ENCODE measurements at regions of chr19 and their contacts with region 1.

Region 1: DNA sequence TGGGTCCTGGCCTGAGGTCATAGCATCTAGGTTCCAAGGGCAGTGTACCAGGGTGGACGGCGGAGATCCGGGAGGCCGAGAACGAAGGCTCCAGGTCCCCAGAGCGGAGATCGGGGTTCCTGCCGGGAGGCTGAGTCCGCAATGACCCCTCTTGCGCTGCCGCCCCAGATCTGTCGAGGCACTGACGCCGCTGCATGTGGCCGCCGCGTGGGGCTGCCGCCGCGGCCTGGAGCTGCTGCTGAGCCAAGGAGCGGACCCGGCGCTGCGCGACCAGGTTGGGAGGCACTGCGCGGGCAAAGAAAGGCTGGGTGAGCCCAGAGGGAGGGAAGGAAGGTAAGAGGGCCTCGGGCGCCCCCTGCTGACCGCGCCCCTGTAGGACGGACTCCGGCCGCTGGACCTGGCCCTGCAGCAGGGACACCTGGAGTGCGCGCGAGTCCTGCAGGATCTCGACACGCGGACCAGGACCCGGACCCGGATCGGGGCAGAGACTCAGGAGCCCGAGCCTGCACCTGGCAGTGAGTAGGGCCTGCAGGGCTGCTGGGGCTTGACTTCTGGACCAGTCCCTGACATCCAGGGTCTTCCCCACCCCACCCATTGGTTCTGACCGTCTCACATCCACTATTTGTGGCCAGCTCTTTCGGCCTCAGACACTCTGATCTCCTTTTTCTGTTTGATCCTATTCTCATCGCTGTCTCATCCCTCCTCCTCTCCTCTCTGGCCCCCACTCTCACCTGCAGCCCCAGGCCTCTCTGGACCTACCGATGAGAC is 971 bp downstream of the ANKLE1 start:
- DNase-seq: peak; percentile 81 to 93 (median 93)
- ATAC-seq: peak; percentile 92
- H3K4me3 ChIP-seq: peak overlapping the region; percentile 34
- H3K27ac ChIP-seq: no peak overlapping the region
- H3K4me1 ChIP-seq: no peaks in the 10 kb centered on the region
- H3K27me3 ChIP-seq: no peaks in the 10 kb centered on the region

Region 2: GRCh38 chr19:17069218-17069617 is 213.5 kb before region 1 on chr19:
- intact Hi-C with region 1: loop called (anchors 2 to 5 kb)
- DNase-seq: peak in 1 of 3 donors; percentile 46
- ATAC-seq: no peak
- H3K4me3 ChIP-seq: no peak overlapping the region
- H3K27ac ChIP-seq: no peak overlapping the region
- H3K4me1 ChIP-seq: peaks cover 2% of the 10 kb centered on the region
- H3K27me3 ChIP-seq: no peaks in the 10 kb centered on the region

Region 3: DNA sequence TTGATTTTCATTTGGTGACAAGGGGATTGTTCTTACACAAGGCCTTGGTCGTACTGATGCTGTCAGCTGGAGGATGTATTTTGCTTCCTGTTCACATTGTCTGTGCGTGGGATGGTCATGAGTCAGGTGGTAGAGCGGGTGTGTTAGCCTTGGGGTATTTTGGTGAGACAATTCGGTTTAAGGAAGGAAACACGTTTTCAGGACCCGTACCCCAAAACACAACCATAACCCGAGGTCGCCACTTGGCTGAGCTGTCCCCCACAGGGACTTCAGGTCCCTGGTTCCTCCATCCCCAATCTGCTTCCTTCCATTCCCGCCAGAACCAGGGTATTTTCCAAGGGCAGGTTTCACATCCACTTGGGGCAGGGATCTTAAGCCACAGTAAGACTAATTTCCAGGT is 192.1 kb before region 1 on chr19:
- intact Hi-C with region 1: no loop called
- DNase-seq: no peak
- ATAC-seq: no peak
- H3K4me3 ChIP-seq: no peak overlapping the region
- H3K27ac ChIP-seq: no peak overlapping the region
- H3K4me1 ChIP-seq: no peaks in the 10 kb centered on the region
- H3K27me3 ChIP-seq: no peaks in the 10 kb centered on the region

Region 4: DNA sequence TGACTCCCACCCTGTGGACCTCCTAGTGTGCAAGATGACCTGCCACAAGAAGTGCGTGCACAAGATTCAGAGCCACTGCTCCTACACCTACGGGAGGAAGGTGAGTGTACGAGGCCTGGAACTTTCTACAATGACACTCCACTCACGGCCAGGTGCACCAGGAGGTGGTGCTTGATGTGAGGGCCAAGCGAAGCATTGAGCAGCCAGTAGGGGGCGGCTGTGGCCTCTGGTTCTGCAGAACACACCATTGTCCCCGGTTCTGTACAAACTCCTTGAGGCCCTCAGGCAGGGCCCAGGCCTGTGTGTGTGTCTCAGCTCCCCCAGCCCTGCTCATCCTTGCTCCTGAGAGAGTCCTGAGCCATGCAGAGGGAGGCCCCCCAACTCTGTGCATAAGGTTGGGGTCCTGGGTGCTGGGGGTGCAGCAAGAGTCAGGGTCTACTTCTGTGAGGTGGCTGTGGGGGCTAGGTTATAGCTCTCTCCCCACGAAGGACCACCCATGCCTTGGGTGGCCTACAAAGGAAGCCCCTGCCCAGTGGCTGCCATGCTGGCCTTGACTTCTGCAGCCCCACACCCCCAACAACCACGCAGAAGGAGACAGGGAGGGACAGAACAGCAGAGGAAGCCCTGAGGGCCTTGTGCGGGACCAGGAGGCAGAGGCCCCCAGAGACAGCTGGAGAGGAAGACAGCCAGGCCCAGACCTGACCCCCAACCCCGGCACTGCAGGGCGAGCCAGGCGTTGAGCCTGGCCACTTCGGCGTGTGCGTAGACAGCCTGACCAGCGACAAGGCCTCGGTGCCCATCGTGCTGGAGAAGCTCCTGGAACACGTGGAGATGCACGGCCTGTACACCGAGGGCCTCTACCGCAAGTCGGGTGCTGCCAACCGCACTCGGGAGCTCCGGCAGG is 77.2 kb before region 1 on chr19:
- intact Hi-C with region 1: loop called in 3 of 4 experiments (anchors 5 to 10 kb)
- DNase-seq: peak; percentile 49 to 85 (median 80)
- ATAC-seq: peak; percentile 45 to 49
- H3K4me3 ChIP-seq: no peak overlapping the region
- H3K27ac ChIP-seq: no peak overlapping the region
- H3K4me1 ChIP-seq: no peaks in the 10 kb centered on the region
- H3K27me3 ChIP-seq: no peaks in the 10 kb centered on the region

Region 5: DNA sequence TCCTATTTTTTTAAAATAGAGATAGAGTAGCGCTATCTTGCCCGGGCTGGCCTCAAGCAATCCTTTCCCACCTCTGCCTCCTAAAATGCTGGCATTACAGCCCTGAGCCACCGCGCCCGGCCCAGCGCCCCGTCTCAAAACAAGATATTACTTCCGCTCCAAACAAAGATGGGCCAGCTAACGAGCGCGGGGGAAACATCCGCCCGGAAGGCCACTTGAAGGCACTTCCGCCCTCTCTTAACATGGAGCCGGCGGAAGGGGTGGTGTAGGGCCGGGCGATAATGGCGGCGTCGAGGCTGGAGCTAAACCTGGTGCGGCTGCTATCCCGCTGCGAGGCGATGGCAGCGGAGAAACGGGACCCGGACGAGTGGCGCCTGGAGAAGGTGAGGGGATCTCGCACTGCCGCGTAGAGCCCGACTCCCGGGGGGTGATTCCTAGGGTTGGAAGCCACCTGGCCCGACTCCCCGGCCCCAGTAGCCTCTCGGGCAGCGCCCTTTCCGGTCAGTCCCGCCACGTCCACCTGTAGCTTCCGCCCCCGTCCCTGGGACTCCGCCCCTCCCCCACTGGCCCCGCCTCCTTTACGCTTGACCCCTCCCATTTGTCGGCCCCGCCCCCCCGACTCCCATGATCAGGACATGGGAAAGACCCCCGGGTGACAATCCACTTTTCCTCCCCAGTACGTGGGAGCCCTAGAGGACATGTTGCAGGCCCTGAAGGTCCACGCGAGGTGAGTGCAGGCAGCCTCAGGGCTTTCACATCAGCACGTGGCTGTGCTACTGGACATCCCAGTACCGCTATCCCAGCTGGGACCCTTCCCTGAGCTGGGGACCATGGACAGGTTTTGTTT is 67.3 kb before region 1 on chr19 and contains the start of gene USE1:
- intact Hi-C with region 1: loop called in 1 of 4 experiments (anchors 10 kb)
- DNase-seq: peak; percentile 92 to 97 (median 95)
- ATAC-seq: peak; percentile 93 to 96
- H3K4me3 ChIP-seq: peak within 1 kb of the TSS; percentile 82
- H3K27ac ChIP-seq: peak within 1 kb of the TSS; percentile 99
- H3K4me1 ChIP-seq: peaks cover 2% of the 10 kb centered on the region
- H3K27me3 ChIP-seq: no peaks in the 10 kb centered on the region
- total RNA-seq, gene USE1: 19.6 to 29.1 (median 27.7) TPM